Panc1 (cell line): ENCODE measurements at regions of chr18 and their contacts with region 1.

Region 1: DNA sequence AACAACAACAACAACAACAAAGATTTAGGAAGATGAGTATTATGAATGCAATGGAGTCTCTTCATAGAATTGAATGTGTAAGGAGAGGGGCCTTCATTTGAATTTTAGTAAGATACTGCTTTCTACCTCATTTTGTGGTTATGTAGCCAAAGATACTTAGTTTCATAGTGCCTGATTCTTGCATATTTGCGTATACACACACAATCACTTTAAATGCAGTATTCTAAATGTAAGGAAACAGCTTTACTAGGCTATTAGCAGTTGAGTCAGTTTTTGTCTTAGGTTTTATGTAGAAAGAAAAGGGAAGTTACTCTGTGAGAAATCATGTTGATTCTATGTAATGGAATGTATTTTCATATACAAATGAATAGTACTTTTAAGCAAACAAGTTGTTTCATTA is 80.5 kb downstream of the HAUS1 start:
- DNase-seq: no peak
- ATAC-seq: no peak
- H3K4me3 ChIP-seq: no peak overlapping the region
- H3K27ac ChIP-seq: no peak overlapping the region
- H3K4me1 ChIP-seq: no peaks in the 10 kb centered on the region
- H3K27me3 ChIP-seq: no peaks in the 10 kb centered on the region
- CTCF ChIP-seq: no peak

Region 2: GRCh38 chr18:45839414-45840395 is 345.0 kb before region 1 on chr18:
- CTCF ChIA-PET with region 1: no interaction called
- POLR2A ChIA-PET with region 1: no interaction called
- in situ Hi-C with region 1: no loop called
- intact Hi-C with region 1: no loop called
- DNase-seq: no peak
- ATAC-seq: peak; percentile 85
- H3K4me3 ChIP-seq: no peak overlapping the region
- H3K27ac ChIP-seq: peak overlapping the region; percentile 23; the same call in 1 of the 2 replicates
- H3K4me1 ChIP-seq: peaks cover 3% of the 10 kb centered on the region; the same call in 1 of the 2 replicates
- H3K27me3 ChIP-seq: no peaks in the 10 kb centered on the region
- CTCF ChIP-seq: peak; percentile 57; the same call in 1 of the 2 replicates

Region 3: GRCh38 chr18:45879681-45880655 is 304.8 kb before region 1 on chr18:
- CTCF ChIA-PET with region 1: no interaction called
- POLR2A ChIA-PET with region 1: interaction called, 16 read pairs
- in situ Hi-C with region 1: no loop called
- intact Hi-C with region 1: no loop called
- DNase-seq: peak; percentile 30
- ATAC-seq: peak; percentile 87
- H3K4me3 ChIP-seq: no peak overlapping the region
- H3K27ac ChIP-seq: no peak overlapping the region
- H3K4me1 ChIP-seq: no peaks in the 10 kb centered on the region
- H3K27me3 ChIP-seq: no peaks in the 10 kb centered on the region
- CTCF ChIP-seq: peak; percentile 89

Region 4: GRCh38 chr18:46167971-46168370 is 16.8 kb before region 1 on chr18:
- CTCF ChIA-PET with region 1: no interaction called
- POLR2A ChIA-PET with region 1: no interaction called
- in situ Hi-C with region 1: no loop called
- intact Hi-C with region 1: no loop called
- DNase-seq: no peak
- ATAC-seq: no peak
- H3K4me3 ChIP-seq: no peak overlapping the region
- H3K27ac ChIP-seq: no peak overlapping the region
- H3K4me1 ChIP-seq: peaks cover 7% of the 10 kb centered on the region; the same call in 1 of the 2 replicates
- H3K27me3 ChIP-seq: no peaks in the 10 kb centered on the region
- CTCF ChIP-seq: no peak

Region 5: GRCh38 chr18:46213295-46213694 is 28.6 kb after region 1 on chr18:
- CTCF ChIA-PET with region 1: no interaction called
- POLR2A ChIA-PET with region 1: no interaction called
- in situ Hi-C with region 1: no loop called
- intact Hi-C with region 1: no loop called
- DNase-seq: no peak
- ATAC-seq: no peak
- H3K4me3 ChIP-seq: no peak overlapping the region
- H3K27ac ChIP-seq: no peak overlapping the region
- H3K4me1 ChIP-seq: no peaks in the 10 kb centered on the region; the same call in 1 of the 2 replicates
- H3K27me3 ChIP-seq: no peaks in the 10 kb centered on the region
- CTCF ChIP-seq: peak; percentile 39; the same call in 1 of the 2 replicates